ENCODE measurements at regions of chr21 and their contacts with region 1.

Region 1: GRCh38 chr21:34888569-34889319 is 160.4 kb downstream of the RUNX1 start:
- DNase-seq: peak; percentile 86
- H3K4me3 Mint-ChIP-seq: peak overlapping the region; percentile 90
- H3K27ac Mint-ChIP-seq: peak overlapping the region; percentile 98
- H3K4me1 Mint-ChIP-seq: peaks cover 44% of the 10 kb centered on the region
- H3K27me3 Mint-ChIP-seq: peaks cover 2% of the 10 kb centered on the region

Region 2: GRCh38 chr21:34807146-34807880 is 81.4 kb before region 1 on chr21:
- CTCF ChIA-PET with region 1: interaction called, 5 read pairs
- POLR2A ChIA-PET with region 1: interaction called, 25 read pairs
- DNase-seq: peak; percentile 72
- H3K4me3 Mint-ChIP-seq: peak overlapping the region; percentile 4
- H3K27ac Mint-ChIP-seq: peak overlapping the region; percentile 87
- H3K4me1 Mint-ChIP-seq: peaks cover 88% of the 10 kb centered on the region
- H3K27me3 Mint-ChIP-seq: no peaks in the 10 kb centered on the region

Region 3: GRCh38 chr21:34865928-34866284 is 22.8 kb before region 1 on chr21:
- CTCF ChIA-PET with region 1: interaction called, 3 read pairs
- POLR2A ChIA-PET with region 1: interaction called, 49 read pairs
- DNase-seq: peak; percentile 46
- H3K4me3 Mint-ChIP-seq: peak overlapping the region; percentile 3
- H3K27ac Mint-ChIP-seq: peak overlapping the region; percentile 66
- H3K4me1 Mint-ChIP-seq: peaks cover 54% of the 10 kb centered on the region
- H3K27me3 Mint-ChIP-seq: no peaks in the 10 kb centered on the region

Region 4: GRCh38 chr21:34967509-34968289 is 79.0 kb after region 1 on chr21:
- CTCF ChIA-PET with region 1: interaction called, 4 read pairs
- POLR2A ChIA-PET with region 1: interaction called, 27 read pairs
- DNase-seq: peak; percentile 55
- H3K4me3 Mint-ChIP-seq: peak overlapping the region; percentile 51
- H3K27ac Mint-ChIP-seq: peak overlapping the region; percentile 94
- H3K4me1 Mint-ChIP-seq: peaks cover 89% of the 10 kb centered on the region
- H3K27me3 Mint-ChIP-seq: peaks cover 4% of the 10 kb centered on the region

Region 5: DNA sequence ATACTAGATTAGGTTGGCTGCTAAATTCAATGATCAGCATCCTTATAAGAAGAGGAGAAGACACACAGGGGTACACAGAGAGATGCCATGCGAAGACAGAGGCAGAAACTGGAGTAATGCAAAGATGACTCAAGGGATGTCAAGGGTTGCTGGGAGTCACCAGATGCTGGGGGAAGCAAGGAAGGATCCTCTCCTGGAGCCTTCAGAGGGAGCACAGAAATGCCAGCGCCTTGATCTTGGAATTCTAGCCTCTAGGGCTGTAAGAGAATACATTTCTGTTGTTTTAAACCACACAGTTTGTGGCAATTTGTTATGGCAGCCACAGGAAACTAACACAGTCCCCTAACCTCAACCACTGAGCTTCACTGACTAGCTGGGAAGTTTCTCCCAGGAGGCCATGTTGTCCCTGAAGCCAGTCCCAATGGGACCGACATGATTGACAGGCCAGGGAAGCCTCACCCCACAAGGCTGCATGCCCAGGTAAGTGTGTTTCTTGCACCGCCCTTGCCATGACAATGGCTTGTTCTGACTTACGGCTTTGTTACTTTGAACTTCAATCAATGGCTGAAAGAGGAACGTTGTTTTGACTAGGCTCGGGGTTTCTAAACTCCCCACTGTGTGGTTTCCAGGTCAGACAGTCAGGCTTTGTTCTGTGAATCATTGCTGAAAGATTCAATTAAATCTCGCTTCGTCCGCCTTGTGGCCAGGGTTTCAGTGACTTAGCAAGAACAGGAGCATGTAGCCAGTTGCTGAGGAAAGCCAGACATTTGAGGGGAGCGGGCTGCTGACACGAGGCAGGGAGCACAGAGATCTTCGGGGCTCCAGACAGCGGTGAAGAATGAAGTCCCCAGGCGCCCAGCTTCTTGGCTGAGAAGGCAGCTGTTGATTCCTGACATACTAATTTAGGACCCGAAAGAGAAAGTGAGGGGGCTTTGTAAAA is 98.1 kb after region 1 on chr21:
- CTCF ChIA-PET with region 1: interaction called, 19 read pairs
- POLR2A ChIA-PET with region 1: interaction called, 51 read pairs
- DNase-seq: peak; percentile 82
- H3K4me3 Mint-ChIP-seq: peak overlapping the region; percentile 61
- H3K27ac Mint-ChIP-seq: peak overlapping the region; percentile 77
- H3K4me1 Mint-ChIP-seq: peaks cover 94% of the 10 kb centered on the region
- H3K27me3 Mint-ChIP-seq: no peaks in the 10 kb centered on the region

Region 6: GRCh38 chr21:35036465-35037383 is 148.0 kb after region 1 on chr21:
- CTCF ChIA-PET with region 1: interaction called, 11 read pairs
- POLR2A ChIA-PET with region 1: interaction called, 623 read pairs
- DNase-seq: no peak
- H3K4me3 Mint-ChIP-seq: peak overlapping the region; percentile 68
- H3K27ac Mint-ChIP-seq: peak overlapping the region; percentile 92
- H3K4me1 Mint-ChIP-seq: peaks cover 95% of the 10 kb centered on the region
- H3K27me3 Mint-ChIP-seq: no peaks in the 10 kb centered on the region

Region 7: DNA sequence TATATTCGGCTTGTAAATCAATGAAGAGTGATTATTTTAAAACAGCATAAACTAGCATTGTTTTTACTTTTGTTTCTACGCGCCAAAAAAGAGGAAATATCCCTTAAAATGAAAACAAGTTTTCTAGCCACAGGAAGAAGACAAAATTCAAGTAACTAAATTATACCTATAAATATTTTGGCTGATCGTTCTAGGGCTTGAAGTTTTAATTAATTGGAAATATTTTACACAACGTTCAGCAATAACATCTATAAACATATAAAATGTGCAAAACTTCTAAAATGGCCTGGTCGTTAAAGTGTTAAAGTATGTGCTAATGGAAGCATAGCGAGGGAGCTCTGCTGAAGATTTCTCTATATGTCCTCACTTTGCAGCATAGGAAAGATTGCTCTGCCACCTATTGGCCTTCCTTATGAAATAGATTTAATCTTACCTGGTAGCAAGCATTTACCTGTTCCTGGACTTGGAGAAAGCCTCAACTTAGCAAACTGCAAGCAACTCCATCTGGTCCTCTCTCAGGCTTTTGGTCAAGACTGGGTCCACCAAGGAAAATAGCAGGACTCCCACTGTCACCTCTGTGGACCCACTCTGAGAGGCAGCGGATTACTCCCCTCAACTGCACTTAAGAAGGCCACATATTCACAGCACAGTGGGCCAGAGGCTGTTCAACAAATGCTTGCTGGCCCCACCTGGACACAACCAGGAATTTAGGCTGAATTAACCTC is 511.7 kb after region 1 on chr21:
- CTCF ChIA-PET with region 1: interaction called, 12 read pairs
- POLR2A ChIA-PET with region 1: interaction called, 7 read pairs
- DNase-seq: peak; percentile 27
- H3K4me3 Mint-ChIP-seq: no peak overlapping the region
- H3K27ac Mint-ChIP-seq: no peak overlapping the region
- H3K4me1 Mint-ChIP-seq: peaks cover 14% of the 10 kb centered on the region
- H3K27me3 Mint-ChIP-seq: no peaks in the 10 kb centered on the region

Measured in activated CD4-positive, alpha-beta memory T cell treated with anti-CD3 and anti-CD28 coated beads, Interleukin-2, amount 10 ng/mL, durations not matched to agents 7 days and 5 days (primary cell).